ENCODE measurements at regions of chr10 and their contacts with region 1.

Region 1: GRCh38 chr10:266974-267425 is 131.7 kb downstream of the ZMYND11 start:
- DNase-seq: no peak
- ATAC-seq: no peak
- H3K4me3 Mint-ChIP-seq: no peak overlapping the region
- H3K27ac Mint-ChIP-seq: no peak overlapping the region
- H3K4me1 Mint-ChIP-seq: peaks cover 7% of the 10 kb centered on the region
- H3K27me3 Mint-ChIP-seq: no peaks in the 10 kb centered on the region

Region 2: GRCh38 chr10:209361-209760 is 57.6 kb before region 1 on chr10:
- CTCF ChIA-PET with region 1: no interaction called
- POLR2A ChIA-PET with region 1: no interaction called
- intact Hi-C with region 1: no loop called
- DNase-seq: no peak
- ATAC-seq: no peak
- H3K4me3 Mint-ChIP-seq: no peak overlapping the region
- H3K27ac Mint-ChIP-seq: no peak overlapping the region
- H3K4me1 Mint-ChIP-seq: peaks cover 1% of the 10 kb centered on the region
- H3K27me3 Mint-ChIP-seq: no peaks in the 10 kb centered on the region

Region 3: DNA sequence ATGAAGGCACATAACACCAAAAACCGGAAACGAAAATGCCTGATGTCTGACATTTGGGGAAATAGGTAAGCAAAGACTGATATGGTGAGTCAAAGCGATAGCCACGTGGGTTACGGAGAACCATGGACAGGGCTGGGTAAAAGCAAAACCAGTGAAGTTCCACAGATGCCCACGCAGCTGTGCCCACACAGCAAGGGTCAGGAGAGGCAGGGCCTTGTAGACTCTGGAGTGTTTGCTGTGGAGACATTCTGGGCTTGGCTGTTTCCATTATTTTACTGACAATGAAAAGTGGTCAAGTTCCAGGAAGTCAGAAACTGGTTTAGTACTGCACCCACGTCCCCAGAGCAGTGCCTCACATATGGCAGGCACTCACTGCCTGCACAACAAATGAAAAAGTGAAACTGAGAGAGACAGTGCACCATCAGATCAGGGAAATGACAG is 16.9 kb after region 1 on chr10:
- CTCF ChIA-PET with region 1: no interaction called
- POLR2A ChIA-PET with region 1: no interaction called
- intact Hi-C with region 1: loop called in 1 of 2 experiments (anchors 1 kb)
- DNase-seq: peak; percentile 72
- ATAC-seq: peak; percentile 86
- H3K4me3 Mint-ChIP-seq: no peak overlapping the region
- H3K27ac Mint-ChIP-seq: peak overlapping the region; percentile 77
- H3K4me1 Mint-ChIP-seq: peaks cover 16% of the 10 kb centered on the region
- H3K27me3 Mint-ChIP-seq: no peaks in the 10 kb centered on the region

Region 4: DNA sequence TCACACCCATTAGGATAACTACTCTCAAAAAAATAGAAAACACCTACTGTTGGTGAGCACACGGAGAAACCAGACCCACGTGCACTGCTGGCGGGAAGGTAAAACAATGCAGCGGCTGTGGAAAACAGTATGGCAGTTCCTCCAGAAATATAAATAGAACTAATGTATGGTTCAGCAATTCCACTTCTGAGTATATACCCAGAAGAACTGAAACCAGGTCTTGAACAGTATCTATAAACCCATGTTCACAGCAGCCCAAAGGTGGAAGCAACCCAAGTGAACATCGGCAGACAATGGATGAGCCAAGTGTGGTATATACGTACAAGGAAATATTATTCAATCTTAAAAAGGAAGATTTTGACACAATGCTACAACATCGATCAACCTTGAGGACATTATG is 33.0 kb after region 1 on chr10:
- CTCF ChIA-PET with region 1: no interaction called
- POLR2A ChIA-PET with region 1: no interaction called
- intact Hi-C with region 1: no loop called
- DNase-seq: no peak
- ATAC-seq: no peak
- H3K4me3 Mint-ChIP-seq: no peak overlapping the region
- H3K27ac Mint-ChIP-seq: no peak overlapping the region
- H3K4me1 Mint-ChIP-seq: no peaks in the 10 kb centered on the region
- H3K27me3 Mint-ChIP-seq: no peaks in the 10 kb centered on the region